Heart right ventricle (tissue), 16 donors: ENCODE measurements at regions of chr21 and their contacts with region 1.

Region 1: GRCh38 chr21:36820176-36821031 is 121.5 kb downstream of the SIM2 start:
- DNase-seq: no peak
- ATAC-seq: peak in 1 of 8 donors; percentile 38
- H3K4me3 ChIP-seq: no peak overlapping the region
- H3K27ac ChIP-seq: no peak overlapping the region
- H3K4me1 ChIP-seq: no peaks in the 10 kb centered on the region
- H3K27me3 ChIP-seq: no peaks in the 10 kb centered on the region
- CTCF ChIP-seq: no peak

Region 2: DNA sequence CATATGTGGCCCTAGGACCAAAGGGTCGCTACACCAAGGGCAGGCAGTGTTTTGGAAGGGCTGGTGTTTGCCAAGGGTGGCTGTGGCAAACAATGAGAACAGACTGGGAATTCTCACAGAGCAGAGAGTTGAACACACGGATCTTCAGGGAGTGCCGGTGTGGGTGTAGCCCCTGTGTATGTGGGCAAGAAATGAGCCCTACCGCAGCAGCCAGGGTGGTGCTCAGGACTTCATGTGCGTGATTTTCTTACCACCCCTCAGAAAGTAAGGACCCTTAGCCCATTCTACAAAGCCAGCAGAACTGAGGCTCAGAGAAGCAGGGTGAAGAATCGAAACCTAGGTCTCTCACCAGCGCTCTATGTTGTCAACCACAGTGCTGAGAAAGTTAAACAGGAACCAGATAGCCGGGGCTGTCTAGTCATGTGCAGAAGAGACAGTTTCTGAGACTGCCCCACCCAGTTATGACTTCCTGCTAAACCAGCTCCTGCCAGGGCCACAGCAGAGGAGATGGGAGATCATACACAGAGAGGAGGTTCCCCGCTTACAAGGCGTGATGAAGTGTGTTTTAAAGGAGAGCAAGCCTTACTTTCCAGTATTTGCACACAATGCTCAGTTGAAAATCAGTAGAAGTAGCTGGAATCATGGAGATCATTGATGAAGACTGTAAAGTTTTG is 522.3 kb before region 1 on chr21:
- intact Hi-C with region 1: no loop called
- DNase-seq: peak in 1 of 2 donors; percentile 38
- ATAC-seq: peak; percentile 75 to 91 (median 85)
- H3K4me3 ChIP-seq: peak overlapping the region in 3 of 10 donors; percentile 11 to 39 (median 15)
- H3K27ac ChIP-seq: peak overlapping the region in 6 of 10 donors; percentile 10 to 93 (median 26)
- H3K4me1 ChIP-seq: peaks cover 0 to 16% (median 0%) of the 10 kb centered on the region in 9 donors
- H3K27me3 ChIP-seq: no peaks in the 10 kb centered on the region
- CTCF ChIP-seq: no peak

Region 3: GRCh38 chr21:36769051-36769839 is 51.2 kb before region 1 on chr21:
- intact Hi-C with region 1: loop called in 1 of 10 experiments (anchors 2 kb)
- DNase-seq: no peak
- ATAC-seq: peak in 6 of 8 donors; percentile 29 to 60 (median 38)
- H3K4me3 ChIP-seq: no peak overlapping the region
- H3K27ac ChIP-seq: peak overlapping the region in 2 of 10 donors; percentile 2 to 34
- H3K4me1 ChIP-seq: peaks cover 0 to 31% (median 21%) of the 10 kb centered on the region in 9 donors
- H3K27me3 ChIP-seq: no peaks in the 10 kb centered on the region
- CTCF ChIP-seq: no peak

Region 4: GRCh38 chr21:36989699-36990507 is 169.5 kb after region 1 on chr21:
- intact Hi-C with region 1: no loop called
- DNase-seq: peak; percentile 94 to 97
- ATAC-seq: peak; percentile 98 to 99 (median 98)
- H3K4me3 ChIP-seq: peak overlapping the region; percentile 26 to 76 (median 66)
- H3K27ac ChIP-seq: peak overlapping the region; percentile 61 to 97 (median 94)
- H3K4me1 ChIP-seq: peaks cover 0 to 16% (median 4%) of the 10 kb centered on the region in 9 donors
- H3K27me3 ChIP-seq: peaks cover 0 to 20% (median 16%) of the 10 kb centered on the region in 7 donors
- CTCF ChIP-seq: peak; percentile 89 to 99 (median 93)